ENCODE measurements at regions of chr12 and their contacts with region 1.

Region 1: DNA sequence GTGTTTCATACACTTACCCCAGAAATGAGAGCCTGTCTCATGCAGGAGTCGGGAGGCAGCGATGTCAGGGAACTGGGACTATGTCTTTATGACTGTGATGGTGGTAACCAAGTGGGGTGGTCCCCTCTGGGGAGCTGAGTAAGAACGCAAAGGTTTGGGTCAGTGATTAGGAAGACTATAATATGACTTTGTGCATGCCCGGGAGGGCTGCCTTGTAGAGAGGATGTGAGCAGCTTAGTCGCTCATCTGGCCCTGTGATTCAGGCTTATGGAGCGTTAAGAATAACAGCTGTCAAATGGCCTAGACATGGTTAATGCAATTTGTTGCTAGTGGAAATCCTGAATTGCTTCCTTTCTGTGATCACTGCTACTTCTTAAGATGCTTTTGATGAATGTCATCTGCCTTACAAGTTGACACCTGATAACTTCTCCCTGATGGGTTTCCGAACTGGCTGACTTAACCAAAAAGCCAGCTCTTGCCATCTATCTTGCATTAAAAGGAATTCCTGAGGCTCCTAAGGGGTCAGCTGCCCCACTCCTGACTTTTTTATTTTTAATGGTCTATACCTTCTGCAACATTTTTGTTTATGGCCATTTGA is 35.4 kb upstream of the AACS start:
- DNase-seq: no peak
- ATAC-seq: no peak
- H3K4me3 ChIP-seq: no peak overlapping the region
- H3K27ac ChIP-seq: no peak overlapping the region
- H3K4me1 ChIP-seq: peaks cover 11% of the 10 kb centered on the region
- H3K27me3 ChIP-seq: no peaks in the 10 kb centered on the region
- CTCF ChIP-seq: no peak

Region 2: GRCh38 chr12:125015680-125016310 is 14.1 kb before region 1 on chr12:
- CTCF ChIA-PET with region 1: no interaction called
- POLR2A ChIA-PET with region 1: interaction called, 10 read pairs
- in situ Hi-C with region 1: no loop called
- intact Hi-C with region 1: no loop called
- DNase-seq: no peak
- ATAC-seq: no peak
- H3K4me3 ChIP-seq: no peak overlapping the region
- H3K27ac ChIP-seq: no peak overlapping the region
- H3K4me1 ChIP-seq: no peaks in the 10 kb centered on the region
- H3K27me3 ChIP-seq: no peaks in the 10 kb centered on the region
- CTCF ChIP-seq: no peak

Region 3: DNA sequence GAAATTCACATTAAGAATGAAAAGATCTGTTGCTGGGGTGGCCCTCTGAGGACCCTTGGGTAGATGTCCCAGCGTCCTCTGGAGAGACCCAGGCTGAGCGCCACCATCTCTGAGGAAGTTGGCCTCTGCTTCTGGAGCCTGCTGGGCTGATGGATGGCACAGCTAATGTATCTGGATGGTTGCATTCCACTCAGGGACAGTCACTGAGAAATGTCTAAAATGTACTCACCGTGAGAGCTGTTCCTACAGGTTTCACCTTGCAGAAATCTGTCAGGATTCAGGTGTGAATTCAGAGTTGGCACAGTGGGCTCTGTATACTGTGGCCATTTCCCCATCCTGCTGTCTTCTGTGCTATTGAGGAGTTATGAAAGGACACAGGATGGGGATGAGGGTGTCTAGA is 282.6 kb after region 1 on chr12:
- CTCF ChIA-PET with region 1: no interaction called
- POLR2A ChIA-PET with region 1: interaction called, 13 read pairs
- in situ Hi-C with region 1: no loop called
- intact Hi-C with region 1: no loop called
- DNase-seq: no peak
- ATAC-seq: no peak
- H3K4me3 ChIP-seq: no peak overlapping the region
- H3K27ac ChIP-seq: no peak overlapping the region
- H3K4me1 ChIP-seq: no peaks in the 10 kb centered on the region
- H3K27me3 ChIP-seq: no peaks in the 10 kb centered on the region; the same call in 1 of the 2 replicates
- CTCF ChIP-seq: no peak